HAP-1 (cell line): ENCODE measurements at regions of chr3 and their contacts with region 1.

Region 1: GRCh38 chr3:187745201-187746058 is at the start of gene BCL6:
- DNase-seq: peak; percentile 90 to 95
- H3K4me3 ChIP-seq: peak within 1 kb of the TSS; percentile 45
- H3K4me1 ChIP-seq: peaks cover 32% of the 10 kb centered on the region
- H3K27me3 ChIP-seq: no peaks in the 10 kb centered on the region

Region 2: GRCh38 chr3:188772886-188773285 is 1027.5 kb after region 1 on chr3:
- in situ Hi-C with region 1: loop called (anchors 25 kb)
- DNase-seq: no peak
- H3K4me3 ChIP-seq: no peak overlapping the region
- H3K4me1 ChIP-seq: no peaks in the 10 kb centered on the region
- H3K27me3 ChIP-seq: no peaks in the 10 kb centered on the region

Region 3: DNA sequence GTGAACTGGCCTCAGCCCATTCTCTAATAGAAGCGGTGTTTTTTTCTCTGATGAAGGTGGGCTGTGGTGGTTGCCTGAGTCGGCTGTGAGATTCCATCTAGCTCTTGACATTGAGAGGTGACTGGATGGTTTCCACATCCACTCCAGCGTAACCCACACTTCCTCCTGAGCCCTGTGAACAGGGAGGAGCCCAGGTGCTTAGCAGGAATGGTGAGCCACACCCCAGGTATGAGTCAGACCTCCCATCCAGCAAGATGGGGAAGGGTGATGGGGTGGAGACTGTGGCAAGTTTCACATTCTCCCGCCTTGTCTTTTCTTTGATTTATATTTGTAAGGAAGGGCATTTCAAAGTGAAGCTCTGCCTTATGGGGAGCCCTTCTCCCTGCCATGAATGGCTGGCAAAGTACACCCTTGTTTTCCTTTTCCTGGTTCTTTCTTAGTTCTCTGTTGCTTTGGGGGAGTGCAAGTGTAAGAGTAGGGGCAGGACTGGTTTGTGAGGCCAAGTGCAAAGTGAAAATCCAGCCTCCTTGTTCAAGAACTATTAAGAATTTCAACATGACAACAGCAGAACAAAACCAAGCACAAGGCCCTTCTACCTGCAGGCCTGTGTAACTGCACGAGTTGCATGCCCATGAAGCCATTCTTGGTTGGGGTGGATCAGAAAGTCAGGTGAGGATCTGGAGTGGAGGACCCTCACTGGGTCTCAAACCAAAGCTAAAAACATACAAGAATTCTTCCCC is 1421.8 kb after region 1 on chr3:
- in situ Hi-C with region 1: loop called (anchors 25 kb)
- DNase-seq: no peak
- H3K4me3 ChIP-seq: no peak overlapping the region
- H3K4me1 ChIP-seq: no peaks in the 10 kb centered on the region
- H3K27me3 ChIP-seq: no peaks in the 10 kb centered on the region

Region 4: GRCh38 chr3:189233225-189233858 is 1487.9 kb after region 1 on chr3:
- in situ Hi-C with region 1: loop called (anchors 25 kb)
- DNase-seq: peak; percentile 24 to 51
- H3K4me3 ChIP-seq: no peak overlapping the region
- H3K4me1 ChIP-seq: no peaks in the 10 kb centered on the region
- H3K27me3 ChIP-seq: peaks cover 11% of the 10 kb centered on the region; the same call in 1 of the 2 replicates